ENCODE measurements at regions of chr17 and their contacts with region 1.

Region 1: GRCh38 chr17:4967539-4968165 is at the start of gene SPAG7:
- DNase-seq: peak; percentile 98
- H3K4me3 ChIP-seq: peak within 1 kb of the TSS; percentile 66 to 71 (median 69)
- H3K27ac ChIP-seq: peak within 1 kb of the TSS; percentile 91 to 97 (median 95)
- H3K4me1 ChIP-seq: peaks cover 0 to 49% (median 40%) of the 10 kb centered on the region in 4 donors
- H3K27me3 ChIP-seq: no peaks in the 10 kb centered on the region
- CTCF ChIP-seq: peak in 1 of 4 experiments; percentile 13
- EP300 ChIP-seq: no peak
- POLR2A ChIP-seq: peak; percentile 46 to 78
- total RNA-seq, gene SPAG7: 42.6 to 84.5 (median 72.3) TPM

Region 2: DNA sequence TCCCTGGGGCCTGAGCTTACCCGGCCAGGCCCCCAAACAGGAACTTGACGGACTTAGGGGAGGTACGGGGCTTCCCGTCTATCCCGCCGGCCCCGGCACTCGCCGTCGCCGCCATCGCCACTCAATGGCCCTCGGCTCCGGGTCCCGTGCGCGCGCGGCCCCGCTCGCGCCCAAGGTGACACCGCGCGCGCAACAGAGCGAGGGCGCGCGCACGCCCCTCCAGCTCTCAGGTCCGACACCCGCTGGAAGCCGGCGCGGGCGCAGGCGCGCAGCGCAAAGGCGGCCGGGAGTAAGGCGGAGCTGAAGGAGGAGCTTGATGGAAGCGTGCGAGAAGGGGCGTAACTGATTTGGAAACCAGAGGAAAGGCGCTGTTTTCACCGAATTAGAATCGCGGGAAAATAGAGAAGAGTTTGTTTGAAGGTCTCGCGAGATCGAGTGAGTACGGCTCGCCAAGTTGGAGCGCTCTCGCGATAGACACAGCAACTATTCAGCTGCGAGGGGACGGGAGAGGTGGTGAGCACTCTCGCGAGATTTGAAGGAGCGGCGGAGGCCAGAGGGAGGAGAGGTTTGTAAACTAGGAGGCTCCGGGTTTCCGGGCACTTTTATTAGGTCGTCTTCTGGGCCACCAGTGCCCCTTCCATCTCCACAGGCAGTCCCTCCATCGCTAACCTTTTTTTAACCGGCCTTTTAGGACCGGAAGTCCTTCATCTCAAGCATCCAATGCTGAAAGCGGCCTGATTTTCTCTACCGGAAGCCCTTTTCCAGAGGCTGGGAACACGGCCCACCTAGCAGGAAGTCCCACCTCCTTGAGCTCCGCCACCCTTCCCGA is 27.6 kb before region 1 on chr17 and contains the starts of genes RNF167 and SLC25A11:
- intact Hi-C with region 1: loop called (anchors 2 kb)
- DNase-seq: peak; percentile 99
- H3K4me3 ChIP-seq: peak within 1 kb of the TSS; percentile 62 to 83 (median 73)
- H3K27ac ChIP-seq: peak within 1 kb of the TSS; percentile 91 to 96 (median 94)
- H3K4me1 ChIP-seq: peaks cover 0 to 57% (median 42%) of the 10 kb centered on the region in 4 donors
- H3K27me3 ChIP-seq: no peaks in the 10 kb centered on the region
- CTCF ChIP-seq: no peak
- EP300 ChIP-seq: peak in 1 of 4 donors; percentile 64
- POLR2A ChIP-seq: peak; percentile 32 to 48
- total RNA-seq, gene RNF167: 51.2 to 71.2 (median 60.3) TPM
- total RNA-seq, gene SLC25A11: 41.0 to 60.3 (median 48.6) TPM

Region 3: GRCh38 chr17:4948931-4949320 is 18.7 kb before region 1 on chr17:
- intact Hi-C with region 1: loop called (anchors 1 kb)
- DNase-seq: peak; percentile 92
- H3K4me3 ChIP-seq: peak overlapping the region; percentile 80 to 99 (median 96)
- H3K27ac ChIP-seq: peak overlapping the region; percentile 98 to 100 (median 99)
- H3K4me1 ChIP-seq: peaks cover 0 to 55% (median 43%) of the 10 kb centered on the region in 4 donors
- H3K27me3 ChIP-seq: no peaks in the 10 kb centered on the region
- CTCF ChIP-seq: no peak
- EP300 ChIP-seq: no peak
- POLR2A ChIP-seq: peak; percentile 22 to 29

Region 4: GRCh38 chr17:4980644-4981216 is 13.1 kb after region 1 on chr17:
- intact Hi-C with region 1: loop called (anchors 1 kb)
- DNase-seq: no peak
- H3K4me3 ChIP-seq: no peak overlapping the region
- H3K27ac ChIP-seq: no peak overlapping the region
- H3K4me1 ChIP-seq: peaks cover 0 to 10% (median 5%) of the 10 kb centered on the region in 4 donors
- H3K27me3 ChIP-seq: no peaks in the 10 kb centered on the region
- CTCF ChIP-seq: peak; percentile 61 to 88 (median 80)
- EP300 ChIP-seq: no peak
- POLR2A ChIP-seq: no peak